ENCODE measurements at regions of chr3 and their contacts with region 1.

Region 1: GRCh38 chr3:186849374-186849975 is 7.0 kb downstream of the ADIPOQ start:
- DNase-seq: peak in 2 of 9 experiments; percentile 70 to 81
- ATAC-seq: peak; percentile 95
- H3K4me3 ChIP-seq: no peak overlapping the region
- H3K4me3 Mint-ChIP-seq: no peak overlapping the region
- H3K27ac ChIP-seq: no peak overlapping the region
- H3K27ac Mint-ChIP-seq: no peak overlapping the region
- H3K4me1 ChIP-seq: no peaks in the 10 kb centered on the region
- H3K4me1 Mint-ChIP-seq: peaks cover 19% of the 10 kb centered on the region
- H3K27me3 ChIP-seq: peaks cover 0 to 3% of the 10 kb centered on the region in 2 experiments
- H3K27me3 Mint-ChIP-seq: peaks cover 4% of the 10 kb centered on the region
- CTCF ChIP-seq: peak; percentile 73

Region 2: GRCh38 chr3:186653080-186653707 is 196.3 kb before region 1 on chr3:
- CTCF ChIA-PET with region 1: no interaction called
- POLR2A ChIA-PET with region 1: no interaction called
- intact Hi-C with region 1: no loop called
- DNase-seq: no peak
- ATAC-seq: no peak
- H3K4me3 ChIP-seq: no peak overlapping the region
- H3K4me3 Mint-ChIP-seq: no peak overlapping the region
- H3K27ac ChIP-seq: no peak overlapping the region
- H3K27ac Mint-ChIP-seq: no peak overlapping the region
- H3K4me1 ChIP-seq: no peaks in the 10 kb centered on the region
- H3K4me1 Mint-ChIP-seq: no peaks in the 10 kb centered on the region
- H3K27me3 ChIP-seq: no peaks in the 10 kb centered on the region
- H3K27me3 Mint-ChIP-seq: peaks cover 22% of the 10 kb centered on the region
- CTCF ChIP-seq: no peak

Region 3: DNA sequence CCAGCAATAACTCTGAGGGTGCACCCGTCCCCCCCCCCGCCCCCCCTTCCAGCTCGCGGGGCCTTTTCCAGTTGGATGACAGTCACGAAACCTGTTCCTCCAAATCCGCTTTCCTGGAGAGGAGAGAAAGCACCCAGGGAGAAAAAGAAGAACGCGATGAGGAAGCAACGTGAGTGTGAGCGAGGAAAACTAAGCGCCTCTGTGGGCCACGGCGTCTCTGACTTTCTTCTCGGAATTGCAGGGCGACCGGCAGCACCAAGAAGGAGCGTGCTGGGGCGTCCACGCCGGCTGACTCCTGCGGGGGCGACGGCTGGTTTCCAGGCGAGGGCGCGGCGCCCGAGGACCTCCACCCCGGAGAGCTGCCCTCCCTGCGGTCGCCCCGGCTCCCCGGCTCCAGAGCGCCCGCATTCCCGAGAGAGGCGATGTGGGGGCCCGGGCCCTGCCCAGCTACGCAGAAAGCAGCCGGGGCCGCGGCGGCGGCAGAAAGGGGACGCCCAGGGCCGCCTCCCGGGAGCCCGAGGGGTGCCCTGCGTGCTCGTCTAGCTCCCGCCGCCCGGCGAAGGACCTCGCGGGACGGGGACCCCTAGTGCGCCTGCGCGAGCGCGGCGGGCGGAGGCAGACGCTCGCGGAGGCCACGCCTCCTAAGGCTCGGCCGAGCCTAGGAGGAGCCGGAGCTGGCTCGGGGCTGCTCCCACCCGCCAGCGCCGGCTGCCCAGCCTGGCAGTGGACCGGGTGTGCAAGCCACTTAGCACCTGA is 22.3 kb before region 1 on chr3:
- CTCF ChIA-PET with region 1: interaction called, 14 read pairs
- POLR2A ChIA-PET with region 1: no interaction called
- intact Hi-C with region 1: no loop called
- DNase-seq: peak; percentile 59 to 95 (median 83)
- ATAC-seq: peak; percentile 93
- H3K4me3 ChIP-seq: peak overlapping the region; percentile 56 to 70
- H3K4me3 Mint-ChIP-seq: peak overlapping the region; percentile 75
- H3K27ac ChIP-seq: no peak overlapping the region
- H3K27ac Mint-ChIP-seq: no peak overlapping the region
- H3K4me1 ChIP-seq: peaks cover 21% of the 10 kb centered on the region
- H3K4me1 Mint-ChIP-seq: peaks cover 24% of the 10 kb centered on the region
- H3K27me3 ChIP-seq: peaks cover 14 to 26% of the 10 kb centered on the region in 2 experiments
- H3K27me3 Mint-ChIP-seq: peaks cover 50% of the 10 kb centered on the region
- CTCF ChIP-seq: no peak

Region 4: GRCh38 chr3:186930641-186931531 is 81.4 kb after region 1 on chr3:
- CTCF ChIA-PET with region 1: interaction called, 120 read pairs
- POLR2A ChIA-PET with region 1: interaction called, 16 read pairs
- intact Hi-C with region 1: loop called (anchors 1 kb)
- DNase-seq: peak; percentile 23 to 88 (median 72)
- ATAC-seq: peak; percentile 77
- H3K4me3 ChIP-seq: peak overlapping the region; percentile 83 to 94
- H3K4me3 Mint-ChIP-seq: peak overlapping the region; percentile 99
- H3K27ac ChIP-seq: peak overlapping the region; percentile 81 to 83
- H3K27ac Mint-ChIP-seq: peak overlapping the region; percentile 95
- H3K4me1 ChIP-seq: peaks cover 17% of the 10 kb centered on the region
- H3K4me1 Mint-ChIP-seq: peaks cover 38% of the 10 kb centered on the region
- H3K27me3 ChIP-seq: no peaks in the 10 kb centered on the region
- H3K27me3 Mint-ChIP-seq: no peaks in the 10 kb centered on the region
- CTCF ChIP-seq: no peak

Region 5: GRCh38 chr3:186985661-186986364 is 136.3 kb after region 1 on chr3:
- CTCF ChIA-PET with region 1: interaction called, 16 read pairs
- POLR2A ChIA-PET with region 1: no interaction called
- intact Hi-C with region 1: no loop called
- DNase-seq: peak in 1 of 9 experiments; percentile 11
- ATAC-seq: no peak
- H3K4me3 ChIP-seq: no peak overlapping the region
- H3K4me3 Mint-ChIP-seq: no peak overlapping the region
- H3K27ac ChIP-seq: no peak overlapping the region
- H3K27ac Mint-ChIP-seq: peak overlapping the region; percentile 72
- H3K4me1 ChIP-seq: peaks cover 3% of the 10 kb centered on the region
- H3K4me1 Mint-ChIP-seq: peaks cover 48% of the 10 kb centered on the region
- H3K27me3 ChIP-seq: no peaks in the 10 kb centered on the region
- H3K27me3 Mint-ChIP-seq: no peaks in the 10 kb centered on the region
- CTCF ChIP-seq: no peak

Region 6: GRCh38 chr3:187031934-187032333 is 182.5 kb after region 1 on chr3:
- CTCF ChIA-PET with region 1: interaction called, 23 read pairs
- POLR2A ChIA-PET with region 1: no interaction called
- intact Hi-C with region 1: no loop called
- DNase-seq: no peak
- ATAC-seq: no peak
- H3K4me3 ChIP-seq: peak overlapping the region in 1 of 2 experiments; percentile 8
- H3K4me3 Mint-ChIP-seq: peak overlapping the region; percentile 67
- H3K27ac ChIP-seq: peak overlapping the region in 1 of 2 experiments; percentile 58
- H3K27ac Mint-ChIP-seq: peak overlapping the region; percentile 95
- H3K4me1 ChIP-seq: peaks cover 56% of the 10 kb centered on the region
- H3K4me1 Mint-ChIP-seq: peaks cover 70% of the 10 kb centered on the region
- H3K27me3 ChIP-seq: no peaks in the 10 kb centered on the region
- H3K27me3 Mint-ChIP-seq: no peaks in the 10 kb centered on the region
- CTCF ChIP-seq: no peak

Region 7: DNA sequence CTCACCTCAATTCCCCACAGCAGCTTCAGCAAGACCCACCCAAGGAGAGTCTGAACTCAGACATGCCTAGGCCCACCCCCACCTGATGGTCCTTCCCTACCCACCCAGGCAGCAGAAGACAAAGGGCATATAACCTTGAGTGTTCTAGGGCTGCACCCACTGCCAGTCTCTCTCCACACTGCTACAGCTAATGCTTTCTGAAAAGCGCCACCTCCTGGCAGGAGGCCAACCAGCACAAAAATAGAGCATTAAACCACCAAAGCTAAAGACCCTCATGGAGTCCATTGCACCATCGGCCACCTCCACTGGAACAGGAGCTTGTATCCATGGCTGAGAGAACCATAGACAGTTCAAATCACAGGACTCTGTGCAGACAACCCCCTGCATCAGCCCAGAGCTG is 301.1 kb after region 1 on chr3:
- CTCF ChIA-PET with region 1: interaction called, 23 read pairs
- POLR2A ChIA-PET with region 1: interaction called, 4 read pairs
- intact Hi-C with region 1: loop called in 1 of 2 experiments (anchors 1 kb)
- DNase-seq: peak; percentile 37 to 80 (median 65)
- ATAC-seq: peak; percentile 56
- H3K4me3 ChIP-seq: no peak overlapping the region
- H3K4me3 Mint-ChIP-seq: no peak overlapping the region
- H3K27ac ChIP-seq: no peak overlapping the region
- H3K27ac Mint-ChIP-seq: no peak overlapping the region
- H3K4me1 ChIP-seq: no peaks in the 10 kb centered on the region
- H3K4me1 Mint-ChIP-seq: peaks cover 9% of the 10 kb centered on the region
- H3K27me3 ChIP-seq: no peaks in the 10 kb centered on the region
- H3K27me3 Mint-ChIP-seq: no peaks in the 10 kb centered on the region
- CTCF ChIP-seq: peak; percentile 39

Region 8: GRCh38 chr3:187210545-187211327 is 361.3 kb after region 1 on chr3:
- CTCF ChIA-PET with region 1: no interaction called
- POLR2A ChIA-PET with region 1: no interaction called
- intact Hi-C with region 1: no loop called
- DNase-seq: no peak
- ATAC-seq: no peak
- H3K4me3 ChIP-seq: no peak overlapping the region
- H3K4me3 Mint-ChIP-seq: no peak overlapping the region
- H3K27ac ChIP-seq: no peak overlapping the region
- H3K27ac Mint-ChIP-seq: no peak overlapping the region
- H3K4me1 ChIP-seq: no peaks in the 10 kb centered on the region
- H3K4me1 Mint-ChIP-seq: no peaks in the 10 kb centered on the region
- H3K27me3 ChIP-seq: no peaks in the 10 kb centered on the region
- H3K27me3 Mint-ChIP-seq: no peaks in the 10 kb centered on the region
- CTCF ChIP-seq: no peak